Gastrocnemius medialis (tissue), 4 donors: ENCODE measurements at regions of chr1 and their contacts with region 1.

Region 1: GRCh38 chr1:13505020-13505419 is 8.8 kb downstream of the LRRC38 start:
- DNase-seq: peak in 1 of 2 donors; percentile 53
- ATAC-seq: no peak
- H3K4me3 ChIP-seq: no peak overlapping the region
- H3K27ac ChIP-seq: peak overlapping the region; percentile 90 to 97 (median 94)
- H3K4me1 ChIP-seq: peaks cover 45 to 50% of the 10 kb centered on the region in 2 donors
- H3K27me3 ChIP-seq: no peaks in the 10 kb centered on the region
- CTCF ChIP-seq: no peak
- POLR2A ChIP-seq: no peak

Region 2: GRCh38 chr1:13494025-13494424 is 11.0 kb before region 1 on chr1:
- in situ Hi-C with region 1: no loop called
- intact Hi-C with region 1: loop called (anchors 1 kb)
- DNase-seq: peak; percentile 73 to 91
- ATAC-seq: peak; percentile 73 to 77
- H3K4me3 ChIP-seq: no peak overlapping the region
- H3K27ac ChIP-seq: peak overlapping the region; percentile 86 to 97 (median 94)
- H3K4me1 ChIP-seq: peaks cover 39 to 42% of the 10 kb centered on the region in 2 donors
- H3K27me3 ChIP-seq: no peaks in the 10 kb centered on the region
- CTCF ChIP-seq: no peak
- POLR2A ChIP-seq: no peak

Region 3: GRCh38 chr1:13619909-13620308 is 114.9 kb after region 1 on chr1:
- in situ Hi-C with region 1: no loop called
- intact Hi-C with region 1: no loop called
- DNase-seq: peak; percentile 60 to 90
- ATAC-seq: peak; percentile 96 to 97
- H3K4me3 ChIP-seq: no peak overlapping the region
- H3K27ac ChIP-seq: peak overlapping the region; percentile 64 to 90 (median 84)
- H3K4me1 ChIP-seq: peaks cover 8 to 16% of the 10 kb centered on the region in 2 donors
- H3K27me3 ChIP-seq: no peaks in the 10 kb centered on the region
- CTCF ChIP-seq: no peak
- POLR2A ChIP-seq: peak; percentile 6 to 64